ENCODE measurements at regions of chr15 and their contacts with region 1.

Region 1: GRCh38 chr15:89740137-89740536 is 10.9 kb downstream of the MESP1 start:
- DNase-seq: peak; percentile 68
- ATAC-seq: peak; percentile 95
- H3K4me3 Mint-ChIP-seq: no peak overlapping the region
- H3K27ac Mint-ChIP-seq: no peak overlapping the region
- H3K4me1 Mint-ChIP-seq: no peaks in the 10 kb centered on the region
- H3K27me3 Mint-ChIP-seq: no peaks in the 10 kb centered on the region
- CTCF ChIP-seq: peak; percentile 83

Region 2: DNA sequence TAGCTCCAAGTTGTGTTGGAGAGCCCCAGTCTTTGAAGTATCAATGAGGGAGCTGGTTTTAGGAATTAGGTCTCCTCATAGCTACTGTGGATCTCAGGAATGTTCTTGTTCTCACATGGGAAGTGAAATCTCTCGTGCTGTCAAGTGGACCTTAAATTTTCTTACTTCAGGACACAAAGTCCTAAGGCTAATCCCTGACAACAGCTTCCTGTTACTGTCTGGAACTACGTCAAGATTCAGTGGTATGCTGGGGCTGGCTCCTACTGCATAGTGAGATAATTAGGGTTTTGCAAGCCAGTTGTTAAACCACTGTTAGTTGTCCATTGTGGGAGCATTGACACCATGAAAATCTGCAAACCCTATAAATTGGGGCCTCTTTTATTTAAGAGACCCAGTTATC is 11.9 kb before region 1 on chr15:
- CTCF ChIA-PET with region 1: interaction called, 20 read pairs
- POLR2A ChIA-PET with region 1: no interaction called
- intact Hi-C with region 1: no loop called
- DNase-seq: no peak
- ATAC-seq: no peak
- H3K4me3 Mint-ChIP-seq: no peak overlapping the region
- H3K27ac Mint-ChIP-seq: no peak overlapping the region
- H3K4me1 Mint-ChIP-seq: no peaks in the 10 kb centered on the region
- H3K27me3 Mint-ChIP-seq: no peaks in the 10 kb centered on the region
- CTCF ChIP-seq: no peak

Region 3: GRCh38 chr15:89750560-89751542 is 10.7 kb after region 1 on chr15 and contains the start of gene MESP1:
- CTCF ChIA-PET with region 1: interaction called, 10 read pairs
- POLR2A ChIA-PET with region 1: no interaction called
- intact Hi-C with region 1: no loop called
- DNase-seq: peak; percentile 90
- ATAC-seq: peak; percentile 97
- H3K4me3 Mint-ChIP-seq: peak within 1 kb of the TSS; percentile 74
- H3K27ac Mint-ChIP-seq: no peak within 1 kb of the TSS
- H3K4me1 Mint-ChIP-seq: peaks cover 2% of the 10 kb centered on the region
- H3K27me3 Mint-ChIP-seq: peaks cover 13% of the 10 kb centered on the region
- CTCF ChIP-seq: peak; percentile 84
- total RNA-seq, gene MESP1: 3.4 to 5.3 TPM

Region 4: GRCh38 chr15:89760303-89761008 is 20.3 kb after region 1 on chr15:
- CTCF ChIA-PET with region 1: interaction called, 19 read pairs
- POLR2A ChIA-PET with region 1: no interaction called
- intact Hi-C with region 1: no loop called
- DNase-seq: peak; percentile 83
- ATAC-seq: peak; percentile 98
- H3K4me3 Mint-ChIP-seq: no peak overlapping the region
- H3K27ac Mint-ChIP-seq: no peak overlapping the region
- H3K4me1 Mint-ChIP-seq: no peaks in the 10 kb centered on the region
- H3K27me3 Mint-ChIP-seq: peaks cover 6% of the 10 kb centered on the region
- CTCF ChIP-seq: peak; percentile 82

Region 5: DNA sequence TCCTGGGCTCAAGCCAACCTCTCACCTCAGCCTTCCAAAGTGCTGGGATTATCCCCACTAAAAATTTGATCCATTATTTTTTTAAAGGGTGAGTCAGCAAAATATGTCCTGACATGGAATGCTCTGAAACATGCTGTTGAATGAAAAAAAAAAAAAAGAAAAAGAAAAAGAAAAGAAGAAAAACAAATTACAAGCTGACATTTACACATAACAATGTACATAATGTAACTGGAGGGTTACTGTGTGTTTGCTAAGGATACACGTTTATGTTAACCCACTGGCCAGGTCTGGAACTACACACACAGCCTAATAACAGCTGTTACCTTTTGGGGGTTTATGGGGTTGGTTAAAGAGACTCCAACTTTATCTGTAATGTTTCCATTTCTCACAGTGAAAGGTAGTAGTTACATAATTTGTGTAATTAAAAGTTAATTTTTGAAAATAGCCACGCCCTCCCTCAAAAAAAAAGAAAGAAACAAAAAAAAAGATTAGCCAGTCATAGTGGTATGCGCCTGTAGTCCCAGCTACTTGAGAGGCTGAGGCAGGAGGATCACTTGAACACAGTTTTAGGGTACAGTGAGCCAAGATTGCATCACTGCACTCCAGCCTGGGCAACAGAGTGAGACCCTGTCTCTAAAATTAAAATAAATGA is 32.9 kb after region 1 on chr15:
- CTCF ChIA-PET with region 1: no interaction called
- POLR2A ChIA-PET with region 1: no interaction called
- intact Hi-C with region 1: no loop called
- DNase-seq: no peak
- ATAC-seq: peak; percentile 50
- H3K4me3 Mint-ChIP-seq: no peak overlapping the region
- H3K27ac Mint-ChIP-seq: no peak overlapping the region
- H3K4me1 Mint-ChIP-seq: no peaks in the 10 kb centered on the region
- H3K27me3 Mint-ChIP-seq: peaks cover 11% of the 10 kb centered on the region
- CTCF ChIP-seq: peak; percentile 23

Region 6: GRCh38 chr15:89785061-89785773 is 45.1 kb after region 1 on chr15:
- CTCF ChIA-PET with region 1: no interaction called
- POLR2A ChIA-PET with region 1: no interaction called
- intact Hi-C with region 1: no loop called
- DNase-seq: no peak
- ATAC-seq: no peak
- H3K4me3 Mint-ChIP-seq: no peak overlapping the region
- H3K27ac Mint-ChIP-seq: no peak overlapping the region
- H3K4me1 Mint-ChIP-seq: peaks cover 5% of the 10 kb centered on the region
- H3K27me3 Mint-ChIP-seq: peaks cover 6% of the 10 kb centered on the region
- CTCF ChIP-seq: no peak

Region 7: DNA sequence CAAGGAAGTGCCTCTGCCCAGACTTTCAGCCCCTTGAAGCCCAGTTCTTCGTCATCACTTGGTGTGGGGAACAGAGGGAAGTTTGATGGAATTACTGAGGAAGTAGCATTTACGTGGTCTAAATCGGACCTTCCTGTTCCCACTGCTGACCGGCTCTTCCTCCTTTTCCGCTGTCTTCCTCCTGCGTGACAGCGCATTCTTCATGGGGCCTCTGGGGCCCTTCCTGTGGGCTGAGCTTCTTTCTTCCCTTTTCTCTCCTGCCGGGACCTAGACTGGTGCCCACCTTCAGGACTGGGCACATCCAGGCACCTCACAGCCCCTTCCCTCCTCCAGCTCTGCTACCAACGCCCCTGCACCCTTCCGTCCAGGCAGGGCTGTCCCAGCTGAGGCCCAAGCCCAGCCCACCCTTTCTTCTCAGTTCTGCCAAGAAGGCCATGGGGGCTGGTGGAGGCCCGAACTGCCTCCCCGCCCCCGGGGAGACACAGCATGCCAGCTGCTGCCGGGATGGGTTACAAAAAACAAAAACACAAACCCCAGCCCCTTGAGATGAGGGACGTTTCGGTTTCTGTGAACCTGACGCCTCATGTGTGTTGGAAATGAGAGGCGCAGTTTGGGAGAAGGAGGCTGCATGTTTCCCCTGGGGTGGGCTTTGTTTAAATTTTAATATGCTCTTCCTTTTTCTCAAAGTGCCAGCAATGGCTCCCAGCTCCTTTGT is 280.0 kb after region 1 on chr15:
- CTCF ChIA-PET with region 1: no interaction called
- POLR2A ChIA-PET with region 1: no interaction called
- intact Hi-C with region 1: no loop called
- DNase-seq: no peak
- ATAC-seq: no peak
- H3K4me3 Mint-ChIP-seq: no peak overlapping the region
- H3K27ac Mint-ChIP-seq: no peak overlapping the region
- H3K4me1 Mint-ChIP-seq: peaks cover 18% of the 10 kb centered on the region
- H3K27me3 Mint-ChIP-seq: no peaks in the 10 kb centered on the region
- CTCF ChIP-seq: no peak

Region 8: DNA sequence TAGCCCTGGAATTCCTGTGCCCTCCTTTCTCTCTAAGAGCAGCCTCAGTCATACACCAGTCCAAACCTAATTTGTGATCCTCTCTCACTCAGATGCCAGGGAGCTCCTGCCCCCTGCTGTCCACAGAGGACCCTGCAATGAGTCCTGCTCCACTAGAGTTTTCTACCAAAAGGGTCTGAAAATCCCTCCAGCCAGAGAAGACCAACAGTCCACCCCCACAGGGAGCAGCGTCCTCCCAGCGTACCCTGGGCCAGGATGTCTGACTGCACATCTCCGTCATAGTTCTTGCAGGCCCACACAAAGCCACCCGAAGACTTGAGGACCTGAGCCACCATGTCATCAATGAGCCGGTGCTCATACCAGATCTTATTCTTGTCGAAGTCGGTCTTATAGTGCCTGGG is 346.7 kb after region 1 on chr15:
- CTCF ChIA-PET with region 1: no interaction called
- POLR2A ChIA-PET with region 1: no interaction called
- intact Hi-C with region 1: loop called (anchors 5 kb)
- DNase-seq: peak; percentile 73
- ATAC-seq: peak; percentile 84
- H3K4me3 Mint-ChIP-seq: no peak overlapping the region
- H3K27ac Mint-ChIP-seq: no peak overlapping the region
- H3K4me1 Mint-ChIP-seq: peaks cover 8% of the 10 kb centered on the region
- H3K27me3 Mint-ChIP-seq: no peaks in the 10 kb centered on the region
- CTCF ChIP-seq: peak; percentile 55

Measured in activated CD8-positive, alpha-beta T cell treated with anti-CD3 and anti-CD28 coated beads for 36 hours (primary cell).